Caco-2 (cell line): ENCODE measurements at regions of chr6 and their contacts with region 1.

Region 1: DNA sequence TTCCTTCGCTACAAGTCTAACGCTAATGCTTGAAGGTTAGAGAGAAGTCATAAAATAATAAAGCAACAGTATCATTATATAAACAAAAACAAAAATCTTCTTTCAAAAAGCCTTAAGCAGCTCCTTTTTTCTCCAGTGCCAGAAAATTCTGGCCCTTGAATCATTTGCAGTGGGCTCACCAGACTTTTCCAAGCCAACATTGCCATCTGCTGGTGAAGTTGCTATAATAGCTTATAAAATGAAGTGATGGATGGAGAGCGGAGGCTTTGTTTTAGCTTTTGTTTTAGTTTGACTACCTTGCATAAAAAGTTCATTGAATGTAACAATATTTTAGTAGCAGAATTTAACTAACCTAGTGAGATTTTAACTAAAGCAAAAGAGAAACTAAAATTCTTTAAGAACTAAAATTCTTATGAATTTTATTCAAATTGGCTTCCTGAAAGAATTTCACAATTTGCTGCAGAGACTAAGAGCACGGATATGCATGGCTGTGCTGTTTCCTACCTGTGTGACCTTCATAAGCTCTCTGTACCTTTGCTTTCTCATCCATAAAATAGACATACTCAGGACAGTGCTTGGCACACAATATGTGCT is 44.8 kb upstream of the SLC2A12 start:
- DNase-seq: peak; percentile 51 to 72
- H3K4me3 ChIP-seq: no peak overlapping the region
- H3K4me3 Mint-ChIP-seq: no peak overlapping the region
- H3K27ac Mint-ChIP-seq: no peak overlapping the region
- H3K4me1 ChIP-seq: no peaks in the 10 kb centered on the region
- H3K4me1 Mint-ChIP-seq: no peaks in the 10 kb centered on the region
- H3K27me3 ChIP-seq: no peaks in the 10 kb centered on the region; the same call in 1 of the 2 replicates
- H3K27me3 Mint-ChIP-seq: peaks cover 3% of the 10 kb centered on the region
- CTCF ChIP-seq: peak; percentile 56 to 60

Region 2: GRCh38 chr6:133447924-133448323 is 649.3 kb before region 1 on chr6:
- CTCF ChIA-PET with region 1: no interaction called
- POLR2A ChIA-PET with region 1: no interaction called
- intact Hi-C with region 1: no loop called
- DNase-seq: no peak
- H3K4me3 ChIP-seq: no peak overlapping the region
- H3K4me3 Mint-ChIP-seq: no peak overlapping the region
- H3K27ac Mint-ChIP-seq: no peak overlapping the region
- H3K4me1 ChIP-seq: no peaks in the 10 kb centered on the region
- H3K4me1 Mint-ChIP-seq: no peaks in the 10 kb centered on the region
- H3K27me3 ChIP-seq: no peaks in the 10 kb centered on the region
- H3K27me3 Mint-ChIP-seq: no peaks in the 10 kb centered on the region
- CTCF ChIP-seq: no peak

Region 3: DNA sequence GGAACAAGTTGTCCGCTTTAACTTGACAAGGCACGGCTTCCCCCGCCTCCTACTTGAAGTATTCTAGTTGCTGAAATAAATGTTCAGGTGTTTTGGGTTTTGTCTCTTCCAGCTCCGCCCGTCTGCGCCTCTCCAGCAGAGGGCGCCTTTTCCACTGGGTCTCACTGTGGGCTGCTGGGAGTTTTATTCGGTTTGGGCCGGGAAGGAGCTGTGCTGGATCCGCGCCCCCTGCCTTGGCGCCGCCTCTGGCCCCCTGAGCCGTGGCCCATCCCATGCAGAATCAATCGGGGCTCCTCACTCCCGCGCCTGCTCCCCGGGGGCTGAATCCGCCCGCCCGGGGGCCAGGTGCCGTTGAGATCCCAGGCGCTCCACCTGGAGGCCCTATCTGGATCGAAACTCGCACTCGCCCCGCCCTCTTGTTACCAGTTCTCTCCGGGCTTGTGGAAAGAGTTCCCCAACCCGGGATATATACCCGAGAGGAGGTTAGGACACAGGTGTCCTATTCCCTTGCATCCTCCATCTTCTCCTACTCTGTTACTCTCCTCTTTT is 259.3 kb before region 1 on chr6:
- CTCF ChIA-PET with region 1: interaction called, 14 read pairs
- POLR2A ChIA-PET with region 1: no interaction called
- intact Hi-C with region 1: loop called (anchors 5 kb)
- DNase-seq: peak; percentile 67 to 83
- H3K4me3 ChIP-seq: peak overlapping the region; percentile 47
- H3K4me3 Mint-ChIP-seq: peak overlapping the region; percentile 70
- H3K27ac Mint-ChIP-seq: peak overlapping the region; percentile 48
- H3K4me1 ChIP-seq: no peaks in the 10 kb centered on the region
- H3K4me1 Mint-ChIP-seq: no peaks in the 10 kb centered on the region
- H3K27me3 ChIP-seq: no peaks in the 10 kb centered on the region
- H3K27me3 Mint-ChIP-seq: no peaks in the 10 kb centered on the region
- CTCF ChIP-seq: peak; percentile 89

Region 4: GRCh38 chr6:133916650-133917151 is 180.5 kb before region 1 on chr6:
- CTCF ChIA-PET with region 1: interaction called, 97 read pairs
- POLR2A ChIA-PET with region 1: no interaction called
- intact Hi-C with region 1: no loop called
- DNase-seq: peak; percentile 83 to 86
- H3K4me3 ChIP-seq: no peak overlapping the region
- H3K4me3 Mint-ChIP-seq: no peak overlapping the region
- H3K27ac Mint-ChIP-seq: no peak overlapping the region
- H3K4me1 ChIP-seq: no peaks in the 10 kb centered on the region
- H3K4me1 Mint-ChIP-seq: no peaks in the 10 kb centered on the region
- H3K27me3 ChIP-seq: no peaks in the 10 kb centered on the region
- H3K27me3 Mint-ChIP-seq: peaks cover 16% of the 10 kb centered on the region
- CTCF ChIP-seq: peak; percentile 84 to 92

Region 5: GRCh38 chr6:133973109-133973971 is 123.9 kb before region 1 on chr6:
- CTCF ChIA-PET with region 1: interaction called, 13 read pairs
- POLR2A ChIA-PET with region 1: no interaction called
- intact Hi-C with region 1: loop called (anchors 1 kb)
- DNase-seq: no peak
- H3K4me3 ChIP-seq: no peak overlapping the region
- H3K4me3 Mint-ChIP-seq: no peak overlapping the region
- H3K27ac Mint-ChIP-seq: no peak overlapping the region
- H3K4me1 ChIP-seq: no peaks in the 10 kb centered on the region
- H3K4me1 Mint-ChIP-seq: peaks cover 3% of the 10 kb centered on the region
- H3K27me3 ChIP-seq: no peaks in the 10 kb centered on the region
- H3K27me3 Mint-ChIP-seq: no peaks in the 10 kb centered on the region
- CTCF ChIP-seq: peak; percentile 40 to 58

Region 6: DNA sequence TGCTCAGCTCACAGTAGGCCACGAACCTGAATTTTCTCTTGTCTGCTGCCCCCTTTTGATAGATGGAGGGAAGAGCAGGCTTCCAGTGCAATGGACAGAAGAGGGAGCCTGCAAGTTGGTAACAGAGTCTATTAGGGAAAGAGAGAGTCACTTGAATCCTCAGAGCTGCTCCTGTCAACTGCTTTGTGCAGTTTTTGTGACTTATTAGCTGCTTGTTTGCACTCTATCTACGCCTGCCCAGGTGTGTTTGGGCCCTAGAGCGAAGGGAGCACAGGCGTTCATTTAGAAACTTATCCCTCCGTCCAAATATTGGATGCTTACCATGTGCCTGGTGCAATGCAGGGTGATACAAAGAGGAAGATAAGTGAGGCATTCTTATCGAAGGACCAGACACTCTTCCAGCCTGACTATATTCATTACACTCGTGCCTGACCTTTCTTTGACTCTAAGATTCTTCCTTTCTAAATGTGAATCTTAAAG is 33.2 kb before region 1 on chr6:
- CTCF ChIA-PET with region 1: interaction called, 22 read pairs
- POLR2A ChIA-PET with region 1: no interaction called
- intact Hi-C with region 1: loop called (anchors 1 kb)
- DNase-seq: peak; percentile 70 to 77
- H3K4me3 ChIP-seq: no peak overlapping the region
- H3K4me3 Mint-ChIP-seq: no peak overlapping the region
- H3K27ac Mint-ChIP-seq: no peak overlapping the region
- H3K4me1 ChIP-seq: peaks cover 10% of the 10 kb centered on the region
- H3K4me1 Mint-ChIP-seq: peaks cover 11% of the 10 kb centered on the region
- H3K27me3 ChIP-seq: no peaks in the 10 kb centered on the region
- H3K27me3 Mint-ChIP-seq: no peaks in the 10 kb centered on the region
- CTCF ChIP-seq: peak; percentile 83 to 94